HepG2 (cell line): ENCODE measurements at regions of chr2 and their contacts with region 1.

Region 1: DNA sequence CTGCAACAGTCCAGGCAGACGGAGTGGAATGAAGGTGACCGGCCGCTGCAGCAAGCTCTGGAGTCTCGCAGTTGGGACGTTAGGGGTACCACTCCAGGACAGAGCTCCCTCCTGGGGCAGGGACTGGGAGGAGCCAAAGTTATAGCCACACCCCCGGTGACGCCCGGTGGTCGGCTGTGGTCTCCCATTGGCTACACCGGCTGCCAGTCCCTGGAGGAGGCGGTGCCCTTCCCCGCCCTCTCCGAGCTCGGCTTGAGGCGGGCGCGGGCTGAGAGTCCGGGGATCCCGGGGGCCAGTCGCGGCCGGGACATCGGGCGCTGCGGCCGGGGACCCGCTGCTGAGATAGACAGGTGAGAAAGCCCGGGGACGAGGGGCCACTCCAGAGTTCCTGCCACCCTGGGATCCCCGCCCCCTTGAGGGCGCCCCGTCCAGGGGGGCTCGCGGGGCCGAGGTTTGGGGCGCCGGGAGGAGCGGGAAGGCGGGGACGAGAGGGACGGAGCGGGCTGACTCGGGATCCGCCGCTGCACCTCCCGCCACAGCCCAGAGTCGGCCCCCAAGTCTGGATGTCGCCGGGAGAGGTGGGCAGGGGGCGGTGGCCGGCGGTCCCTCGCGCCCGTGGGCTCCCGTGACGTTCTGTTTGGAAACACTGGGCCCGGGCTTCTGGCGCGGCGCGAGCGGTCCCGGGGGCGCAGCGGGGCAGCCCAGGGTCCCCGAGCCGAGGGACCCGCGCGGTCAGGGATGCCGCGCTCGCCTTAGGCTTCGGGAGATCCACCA is at the start of gene PLEKHH2:
- DNase-seq: peak; percentile 77
- ATAC-seq: peak; percentile 98
- H3K4me3 ChIP-seq: peak within 1 kb of the TSS; percentile 77 to 87 (median 86)
- H3K27ac ChIP-seq: no peak within 1 kb of the TSS
- H3K4me1 ChIP-seq: peaks cover 51% of the 10 kb centered on the region
- H3K27me3 ChIP-seq: peaks cover 0 to 28% of the 10 kb centered on the region in 2 experiments; a peak in 3 of 5 replicates
- CTCF ChIP-seq: peak; percentile 18; the same call in 1 of the 2 replicates
- EP300 ChIP-seq: no peak
- POLR2A ChIP-seq: no peak
- RAD21 ChIP-seq: no peak
- total RNA-seq, gene PLEKHH2: 0.52 and 1.1 TPM in 2 replicates

Region 2: DNA sequence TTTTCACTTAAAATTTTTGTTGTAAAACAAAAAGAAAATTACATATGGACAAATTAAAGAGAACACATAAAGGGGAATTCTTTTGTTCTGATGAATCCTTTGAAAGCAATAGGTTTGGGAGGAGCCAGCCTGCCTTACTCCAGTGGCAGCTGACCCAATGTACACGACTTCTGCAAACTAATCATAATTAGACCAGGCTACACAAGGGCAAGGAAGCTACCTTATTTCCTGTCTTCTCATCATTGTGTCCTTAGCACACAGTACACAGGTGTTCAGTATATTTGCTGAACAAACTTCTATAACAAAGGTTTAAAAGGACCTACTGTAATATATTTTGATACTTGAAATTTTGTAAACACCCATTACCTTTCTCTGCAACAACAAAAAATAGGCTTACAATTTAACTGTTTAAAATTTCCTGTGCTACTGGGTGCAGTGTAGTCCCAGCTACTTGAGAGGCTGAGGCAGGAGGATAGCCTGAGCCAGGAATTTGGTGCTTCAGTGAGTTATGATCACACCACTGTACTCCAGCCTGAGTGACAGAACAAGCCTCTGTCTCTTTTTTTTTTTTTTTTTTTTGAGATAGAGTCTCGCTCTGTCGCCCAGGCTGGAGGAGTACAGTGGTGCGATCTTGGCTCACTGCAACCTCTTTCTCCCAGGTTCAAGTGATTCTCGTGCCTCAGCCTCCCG is 1162.3 kb before region 1 on chr2:
- CTCF ChIA-PET with region 1: no interaction called
- POLR2A ChIA-PET with region 1: no interaction called
- in situ Hi-C with region 1: no loop called
- intact Hi-C with region 1: no loop called
- DNase-seq: peak; percentile 39
- ATAC-seq: peak; percentile 82
- H3K4me3 ChIP-seq: no peak overlapping the region
- H3K27ac ChIP-seq: no peak overlapping the region
- H3K4me1 ChIP-seq: peaks cover 13% of the 10 kb centered on the region
- H3K27me3 ChIP-seq: no peaks in the 10 kb centered on the region
- CTCF ChIP-seq: no peak
- EP300 ChIP-seq: peak in 1 of 2 experiments; percentile 21; a peak in 1 of 4 replicates
- POLR2A ChIP-seq: no peak
- RAD21 ChIP-seq: no peak

Region 3: GRCh38 chr2:43676322-43677050 is 39.3 kb after region 1 on chr2 and contains the start of gene C1GALT1C1L:
- CTCF ChIA-PET with region 1: no interaction called
- POLR2A ChIA-PET with region 1: interaction called, 8 read pairs
- in situ Hi-C with region 1: no loop called
- intact Hi-C with region 1: loop called (anchors 2 kb)
- DNase-seq: peak; percentile 22
- ATAC-seq: peak; percentile 98
- H3K4me3 ChIP-seq: peak within 1 kb of the TSS; percentile 58 to 75 (median 68)
- H3K27ac ChIP-seq: no peak within 1 kb of the TSS
- H3K4me1 ChIP-seq: peaks cover 17% of the 10 kb centered on the region
- H3K27me3 ChIP-seq: no peaks in the 10 kb centered on the region
- CTCF ChIP-seq: no peak
- EP300 ChIP-seq: no peak
- POLR2A ChIP-seq: peak in 1 of 2 experiments; percentile 58; a peak in 2 of 4 replicates
- RAD21 ChIP-seq: no peak
- total RNA-seq, gene C1GALT1C1L: 0.91 and 1.3 TPM in 2 replicates

Region 4: DNA sequence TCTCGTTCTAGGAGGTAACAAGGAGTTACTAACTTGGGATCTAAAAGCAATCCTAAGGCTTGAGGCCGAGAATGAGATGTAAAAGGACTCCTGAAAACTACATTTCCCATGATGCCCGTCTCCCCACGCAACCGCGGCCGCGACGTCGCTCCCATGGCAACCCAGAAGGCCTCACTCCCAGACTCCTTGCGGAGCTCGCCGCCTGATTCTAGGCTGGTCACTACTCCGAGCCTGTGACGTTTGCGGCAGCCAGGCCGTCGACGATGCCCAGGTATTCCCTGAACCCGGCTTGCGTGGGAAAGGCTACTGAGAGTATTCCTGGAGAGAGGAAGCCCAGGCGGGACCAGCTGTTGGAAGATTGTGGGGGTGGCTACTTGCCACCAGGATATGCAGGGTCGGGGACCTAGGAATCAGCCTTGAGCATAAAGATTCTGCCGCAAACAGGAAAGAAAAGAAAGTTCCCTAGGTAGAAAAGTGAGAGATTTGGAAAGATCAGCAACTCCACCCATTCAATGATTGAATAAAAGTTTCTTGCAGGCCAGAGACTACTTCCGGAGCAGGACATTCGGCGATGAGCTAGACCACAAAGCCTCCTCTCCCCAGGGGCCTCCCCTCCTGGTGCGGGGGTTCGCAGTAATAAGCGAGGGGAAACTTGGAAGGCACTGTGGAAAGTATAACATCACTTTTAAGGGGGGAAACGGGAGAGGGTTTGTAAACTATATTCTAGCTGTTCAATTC is 136.8 kb after region 1 on chr2 and contains the start of gene DYNC2LI1:
- CTCF ChIA-PET with region 1: no interaction called
- POLR2A ChIA-PET with region 1: interaction called, 3 read pairs
- in situ Hi-C with region 1: no loop called
- intact Hi-C with region 1: loop called (anchors 10 kb)
- DNase-seq: peak; percentile 83
- ATAC-seq: peak; percentile 99
- H3K4me3 ChIP-seq: peak within 1 kb of the TSS; percentile 86 to 94 (median 89)
- H3K27ac ChIP-seq: peak within 1 kb of the TSS; percentile 16
- H3K4me1 ChIP-seq: peaks cover 11% of the 10 kb centered on the region
- H3K27me3 ChIP-seq: no peaks in the 10 kb centered on the region; a peak in 1 of 5 replicates
- CTCF ChIP-seq: no peak
- EP300 ChIP-seq: no peak
- POLR2A ChIP-seq: peak; percentile 35 to 66; a peak in 3 of 4 replicates
- RAD21 ChIP-seq: no peak
- total RNA-seq, gene DYNC2LI1: 23.2 and 27.9 TPM in 2 replicates